ENCODE measurements at regions of chr16 and their contacts with region 1.

Region 1: GRCh38 chr16:85245307-85246172 is 133.3 kb upstream of the CIBAR2 start:
- DNase-seq: peak; percentile 83 to 88 (median 88)
- H3K4me3 ChIP-seq: no peak overlapping the region
- H3K27ac ChIP-seq: no peak overlapping the region
- H3K4me1 ChIP-seq: peaks cover 0 to 26% (median 4%) of the 10 kb centered on the region in 4 experiments
- H3K27me3 ChIP-seq: peaks cover 0 to 2% (median 0%) of the 10 kb centered on the region in 5 experiments

Region 2: GRCh38 chr16:85114909-85115567 is 130.5 kb before region 1 on chr16:
- CTCF ChIA-PET with region 1: interaction called, 10 read pairs
- POLR2A ChIA-PET with region 1: no interaction called
- DNase-seq: peak; percentile 66 to 73 (median 72)
- H3K4me3 ChIP-seq: peak overlapping the region in 5 of 7 experiments; percentile 19 to 58 (median 35)
- H3K27ac ChIP-seq: peak overlapping the region in 1 of 2 experiments; percentile 34
- H3K4me1 ChIP-seq: peaks cover 0 to 4% (median 2%) of the 10 kb centered on the region in 4 experiments
- H3K27me3 ChIP-seq: no peaks in the 10 kb centered on the region

Region 3: GRCh38 chr16:85227084-85227945 is 18.2 kb before region 1 on chr16:
- CTCF ChIA-PET with region 1: interaction called, 11 read pairs
- POLR2A ChIA-PET with region 1: no interaction called
- DNase-seq: no peak
- H3K4me3 ChIP-seq: no peak overlapping the region
- H3K27ac ChIP-seq: no peak overlapping the region
- H3K4me1 ChIP-seq: peaks cover 0 to 12% (median 5%) of the 10 kb centered on the region in 4 experiments
- H3K27me3 ChIP-seq: no peaks in the 10 kb centered on the region

Region 4: GRCh38 chr16:85258629-85259028 is 13.1 kb after region 1 on chr16:
- CTCF ChIA-PET with region 1: interaction called, 68 read pairs
- POLR2A ChIA-PET with region 1: no interaction called
- DNase-seq: peak in 2 of 3 donors; percentile 75 to 89
- H3K4me3 ChIP-seq: peak overlapping the region in 3 of 7 experiments; percentile 9 to 46 (median 33)
- H3K27ac ChIP-seq: no peak overlapping the region
- H3K4me1 ChIP-seq: peaks cover 0 to 52% (median 34%) of the 10 kb centered on the region in 4 experiments
- H3K27me3 ChIP-seq: no peaks in the 10 kb centered on the region

Region 5: DNA sequence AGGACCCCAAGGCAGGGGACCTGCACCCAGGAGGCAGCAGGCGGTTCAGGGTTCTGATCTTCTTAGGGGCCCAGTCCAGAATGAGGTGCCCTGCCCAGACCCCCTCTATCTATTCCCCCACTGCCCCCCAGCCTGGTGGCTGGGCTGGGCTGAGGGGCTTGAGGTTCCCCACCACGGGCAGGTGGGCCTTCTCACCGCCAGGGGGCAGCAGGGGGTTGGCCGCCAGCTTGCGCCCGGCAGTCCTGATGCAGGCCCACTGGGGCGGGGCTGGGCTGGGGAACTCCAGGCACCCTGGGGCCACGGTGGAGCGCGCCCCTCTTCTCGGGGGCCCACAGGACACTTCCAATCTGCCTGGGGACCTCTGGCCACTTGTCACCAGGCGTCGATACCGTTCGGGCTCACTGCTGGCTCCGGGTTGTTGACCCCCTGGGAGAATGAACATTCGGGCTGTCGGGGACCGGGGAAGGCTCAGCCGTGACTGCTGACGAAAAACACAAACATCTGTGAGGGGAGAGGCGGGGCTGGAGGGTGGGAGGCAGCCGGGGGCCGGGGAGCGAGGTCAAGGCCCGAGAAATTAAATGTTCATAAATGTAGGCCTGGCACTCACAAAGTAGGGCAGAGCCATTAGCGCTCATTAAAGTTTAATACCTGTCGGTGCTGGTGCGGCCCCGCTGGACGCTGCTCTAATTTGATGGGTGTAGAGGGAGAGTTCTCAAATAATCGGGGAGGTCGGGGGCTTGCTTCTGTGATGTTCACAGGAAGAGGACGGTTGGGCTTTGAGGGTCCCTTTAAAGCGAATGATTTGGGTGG is 148.3 kb after region 1 on chr16:
- CTCF ChIA-PET with region 1: no interaction called
- POLR2A ChIA-PET with region 1: no interaction called
- DNase-seq: peak; percentile 61 to 78 (median 73)
- H3K4me3 ChIP-seq: no peak overlapping the region
- H3K27ac ChIP-seq: no peak overlapping the region
- H3K4me1 ChIP-seq: peaks cover 0 to 33% (median 28%) of the 10 kb centered on the region in 4 experiments
- H3K27me3 ChIP-seq: no peaks in the 10 kb centered on the region

Measured in common myeloid progenitor, CD34-positive (primary cell).